GM12878 (cell line): ENCODE measurements at regions of chr10 and their contacts with region 1.

Region 1: GRCh38 chr10:73060738-73061635 is 35.7 kb downstream of the P4HA1 start:
- DNase-seq: no peak
- ATAC-seq: peak; percentile 87
- H3K4me3 ChIP-seq: no peak overlapping the region
- H3K27ac ChIP-seq: no peak overlapping the region
- H3K4me1 ChIP-seq: peaks cover 2% of the 10 kb centered on the region; the same call in 1 of the 2 replicates
- H3K27me3 ChIP-seq: no peaks in the 10 kb centered on the region
- CTCF ChIP-seq: peak; percentile 27 to 53 (median 49); a peak in 5 of 6 replicates
- EP300 ChIP-seq: no peak
- POLR2A ChIP-seq: no peak
- RAD21 ChIP-seq: no peak; the same call in 1 of the 2 replicates

Region 2: DNA sequence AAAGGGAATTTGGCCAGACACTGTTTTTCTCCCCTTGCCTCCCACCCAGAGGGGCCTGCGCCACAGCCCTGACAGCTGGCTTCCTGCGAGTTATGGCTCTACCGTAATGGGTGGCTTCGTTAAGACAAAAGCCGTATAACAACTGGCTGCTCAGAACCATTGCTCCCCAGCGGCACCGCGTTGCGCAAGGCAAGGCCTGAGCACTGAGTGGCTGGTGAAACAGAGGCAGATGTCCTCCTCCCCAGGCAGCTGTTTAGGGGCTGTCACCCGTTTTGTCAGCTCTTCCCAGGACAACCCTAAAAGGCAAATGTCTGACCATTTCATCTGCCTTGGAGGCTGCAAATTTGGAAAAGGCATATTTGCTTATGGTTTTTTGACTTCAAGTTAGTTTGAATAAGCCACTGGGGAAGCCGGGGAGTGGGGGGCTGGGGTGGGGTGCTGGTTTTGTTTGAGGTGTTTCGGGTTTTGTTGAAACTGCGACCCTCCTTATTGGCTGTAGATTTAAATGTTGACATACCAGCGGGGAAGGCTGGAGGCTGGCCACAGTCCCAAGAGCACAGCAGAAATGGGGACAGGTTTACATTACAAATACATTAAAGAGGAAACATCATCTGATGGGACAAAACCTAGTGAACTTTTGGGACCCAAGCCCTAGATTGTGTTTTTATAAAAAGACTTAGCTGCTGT is 972.0 kb before region 1 on chr10:
- CTCF ChIA-PET with region 1: no interaction called
- POLR2A ChIA-PET with region 1: no interaction called
- RAD21 ChIA-PET with region 1: no interaction called
- SMC1A ChIA-PET with region 1: no interaction called
- in situ Hi-C with region 1: no loop called
- intact Hi-C with region 1: no loop called
- DNase-seq: no peak
- ATAC-seq: no peak
- H3K4me3 ChIP-seq: no peak overlapping the region
- H3K27ac ChIP-seq: no peak overlapping the region
- H3K4me1 ChIP-seq: 0 out of 2 replicates have a peak, but pooled peaks cover 10% of the 10 kb centered on the region
- H3K27me3 ChIP-seq: peaks cover 15 to 16% of the 10 kb centered on the region in 2 experiments
- CTCF ChIP-seq: no peak
- EP300 ChIP-seq: no peak
- POLR2A ChIP-seq: no peak
- RAD21 ChIP-seq: no peak

Region 3: DNA sequence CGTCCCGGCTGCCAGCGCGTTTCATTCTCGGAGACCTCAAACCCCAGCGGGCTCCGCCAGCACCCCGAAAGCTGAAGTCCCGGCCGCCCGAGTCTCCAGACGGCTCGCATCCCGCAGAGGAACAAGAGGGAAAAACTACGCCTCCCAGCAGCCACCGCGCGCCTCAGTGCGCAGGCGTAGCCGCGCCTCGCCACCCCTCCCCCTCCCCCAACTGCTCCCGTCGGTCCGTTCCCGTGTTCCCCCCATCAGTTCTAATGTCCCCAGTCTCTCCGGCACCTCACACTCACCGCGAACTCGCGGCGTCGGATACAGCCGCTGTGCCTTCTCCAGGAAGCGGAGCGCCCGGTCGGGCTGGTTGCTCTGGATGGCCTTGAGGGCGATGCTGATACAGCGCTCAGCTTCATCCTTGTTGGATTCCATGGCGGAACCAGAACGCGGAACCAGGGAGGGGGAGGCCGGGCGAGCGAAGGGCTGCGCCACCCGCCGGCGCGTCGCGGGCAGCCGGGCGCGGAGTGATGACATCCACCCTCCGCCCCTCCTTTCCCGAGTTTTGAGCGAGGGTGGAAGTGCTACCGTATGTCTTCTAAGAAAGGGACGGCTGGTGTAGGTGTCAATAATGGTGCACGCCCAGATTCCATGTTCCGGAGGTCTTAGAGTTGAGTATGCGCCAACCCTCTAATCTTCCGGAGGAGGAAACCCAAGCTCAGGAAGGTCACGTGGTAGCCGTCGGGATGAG is 706.3 kb before region 1 on chr10 and contains the start of gene DNAJB12:
- CTCF ChIA-PET with region 1: no interaction called
- POLR2A ChIA-PET with region 1: no interaction called
- RAD21 ChIA-PET with region 1: no interaction called
- SMC1A ChIA-PET with region 1: interaction called, 4 read pairs
- in situ Hi-C with region 1: loop called (anchors 5 kb)
- intact Hi-C with region 1: no loop called
- DNase-seq: peak; percentile 82
- ATAC-seq: peak; percentile 91
- H3K4me3 ChIP-seq: peak within 1 kb of the TSS; percentile 98
- H3K27ac ChIP-seq: peak within 1 kb of the TSS; percentile 87
- H3K4me1 ChIP-seq: peaks cover 7% of the 10 kb centered on the region
- H3K27me3 ChIP-seq: no peaks in the 10 kb centered on the region
- CTCF ChIP-seq: no peak
- EP300 ChIP-seq: no peak
- POLR2A ChIP-seq: peak; percentile 95
- RAD21 ChIP-seq: no peak
- polyA plus RNA-seq, gene DNAJB12: 4.6 to 7.6 TPM

Region 4: GRCh38 chr10:73076360-73077183 is 15.6 kb after region 1 on chr10:
- CTCF ChIA-PET with region 1: interaction called, 6 read pairs
- POLR2A ChIA-PET with region 1: interaction called, 3 read pairs
- RAD21 ChIA-PET with region 1: interaction called, 3 read pairs
- SMC1A ChIA-PET with region 1: interaction called, 12 read pairs
- in situ Hi-C with region 1: no loop called
- intact Hi-C with region 1: no loop called
- DNase-seq: no peak
- ATAC-seq: peak; percentile 61
- H3K4me3 ChIP-seq: 0 out of 2 replicates have a peak overlapping the region, but pooled peaks have one; percentile 9
- H3K27ac ChIP-seq: peak overlapping the region; percentile 60
- H3K4me1 ChIP-seq: peaks cover 9% of the 10 kb centered on the region; the same call in 1 of the 2 replicates
- H3K27me3 ChIP-seq: no peaks in the 10 kb centered on the region
- CTCF ChIP-seq: no peak
- EP300 ChIP-seq: no peak
- POLR2A ChIP-seq: no peak
- RAD21 ChIP-seq: no peak

Region 5: DNA sequence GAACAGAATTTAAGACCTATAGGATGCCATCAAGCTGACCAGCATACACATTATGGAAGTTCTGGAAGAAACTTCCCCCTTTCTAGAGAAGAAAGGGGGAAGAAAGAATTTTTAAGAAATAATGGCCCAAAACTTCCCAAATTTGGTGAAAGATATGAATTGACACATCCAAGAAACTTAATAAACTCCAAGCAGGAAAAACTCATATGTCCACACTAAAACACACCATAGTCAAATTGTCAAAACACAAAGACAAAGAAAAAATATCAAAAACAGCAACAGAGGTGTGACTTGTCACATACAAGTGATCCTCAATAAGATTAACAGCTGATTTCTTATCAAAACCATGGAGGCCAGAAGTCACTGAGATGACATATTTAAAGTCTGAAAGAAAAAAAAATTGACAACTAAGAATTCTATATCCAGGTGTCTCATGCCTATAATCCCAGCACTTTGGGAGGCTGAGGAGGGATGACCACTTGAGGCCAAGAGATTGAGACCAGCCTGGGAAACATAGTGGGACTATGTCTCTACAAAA is 245.3 kb after region 1 on chr10:
- CTCF ChIA-PET with region 1: no interaction called
- POLR2A ChIA-PET with region 1: no interaction called
- RAD21 ChIA-PET with region 1: no interaction called
- SMC1A ChIA-PET with region 1: no interaction called
- in situ Hi-C with region 1: no loop called
- intact Hi-C with region 1: no loop called
- DNase-seq: no peak
- ATAC-seq: no peak
- H3K4me3 ChIP-seq: no peak overlapping the region
- H3K27ac ChIP-seq: no peak overlapping the region
- H3K4me1 ChIP-seq: no peaks in the 10 kb centered on the region
- H3K27me3 ChIP-seq: no peaks in the 10 kb centered on the region
- CTCF ChIP-seq: no peak
- EP300 ChIP-seq: no peak
- POLR2A ChIP-seq: no peak
- RAD21 ChIP-seq: no peak

Region 6: GRCh38 chr10:73926152-73926764 is 865.3 kb after region 1 on chr10:
- CTCF ChIA-PET with region 1: no interaction called
- POLR2A ChIA-PET with region 1: no interaction called
- RAD21 ChIA-PET with region 1: no interaction called
- SMC1A ChIA-PET with region 1: no interaction called
- in situ Hi-C with region 1: no loop called
- intact Hi-C with region 1: no loop called
- DNase-seq: no peak
- ATAC-seq: no peak
- H3K4me3 ChIP-seq: no peak overlapping the region
- H3K27ac ChIP-seq: no peak overlapping the region
- H3K4me1 ChIP-seq: peaks cover 3% of the 10 kb centered on the region; the same call in 1 of the 2 replicates
- H3K27me3 ChIP-seq: peaks cover 0 to 6% of the 10 kb centered on the region in 2 experiments; a peak in 2 of 4 replicates
- CTCF ChIP-seq: no peak
- EP300 ChIP-seq: no peak
- POLR2A ChIP-seq: no peak
- RAD21 ChIP-seq: no peak